IMR-90 (cell line): ENCODE measurements at regions of chr6 and their contacts with region 1.

Region 1: DNA sequence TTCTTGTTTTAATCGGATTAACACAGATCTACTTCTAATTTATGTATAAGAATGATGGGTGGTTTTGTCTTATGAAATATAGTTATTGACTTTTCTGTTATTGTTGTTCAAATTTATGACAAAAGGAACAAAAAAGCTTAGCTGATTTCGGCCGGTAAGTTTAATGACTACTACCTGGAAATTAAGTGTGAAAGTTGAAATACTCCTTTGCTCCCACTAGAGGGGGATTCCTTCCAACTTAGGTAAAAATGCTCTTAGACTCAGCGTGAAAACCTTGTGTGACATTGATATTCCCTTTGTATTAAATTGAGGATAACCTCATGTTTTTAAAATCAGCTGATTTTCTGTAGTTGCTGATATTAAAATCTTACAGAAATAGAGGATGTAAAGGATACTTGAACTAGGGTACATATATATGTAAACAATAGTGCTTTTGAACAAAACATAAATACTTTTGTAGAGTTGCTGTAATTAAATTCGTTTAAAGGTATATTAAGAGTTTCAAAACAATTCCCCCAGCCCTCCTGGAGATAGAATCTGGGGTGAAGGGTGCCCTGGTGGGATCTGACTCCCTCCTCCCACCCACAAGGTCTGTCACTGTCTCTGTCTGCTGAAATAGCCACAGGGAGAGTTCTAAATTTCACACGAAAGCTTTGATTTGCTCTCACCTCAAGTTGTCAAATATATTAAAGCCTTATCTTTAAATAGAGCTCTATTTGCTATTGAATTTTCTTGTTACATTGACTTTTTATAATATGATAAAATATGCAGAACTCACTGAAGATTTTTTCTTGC is 257.5 kb downstream of the ARID1B start:
- DNase-seq: peak; percentile 72
- ATAC-seq: peak; percentile 53
- H3K4me3 ChIP-seq: no peak overlapping the region
- H3K27ac ChIP-seq: no peak overlapping the region
- H3K4me1 ChIP-seq: peaks cover 6% of the 10 kb centered on the region
- H3K27me3 ChIP-seq: no peaks in the 10 kb centered on the region
- CTCF ChIP-seq: peak; percentile 75
- POLR2A ChIP-seq: no peak
- RAD21 ChIP-seq: peak; percentile 79

Region 2: GRCh38 chr6:156994215-156995076 is 40.2 kb before region 1 on chr6:
- CTCF ChIA-PET with region 1: no interaction called
- POLR2A ChIA-PET with region 1: no interaction called
- dilution Hi-C with region 1: no loop called
- in situ Hi-C with region 1: no loop called
- intact Hi-C with region 1: no loop called
- DNase-seq: no peak
- ATAC-seq: no peak
- H3K4me3 ChIP-seq: no peak overlapping the region
- H3K27ac ChIP-seq: no peak overlapping the region
- H3K4me1 ChIP-seq: peaks cover 10% of the 10 kb centered on the region
- H3K27me3 ChIP-seq: no peaks in the 10 kb centered on the region
- CTCF ChIP-seq: no peak
- POLR2A ChIP-seq: no peak
- RAD21 ChIP-seq: no peak

Region 3: GRCh38 chr6:157184202-157185020 is 149.8 kb after region 1 on chr6:
- CTCF ChIA-PET with region 1: interaction called, 8 read pairs
- POLR2A ChIA-PET with region 1: no interaction called
- dilution Hi-C with region 1: no loop called
- in situ Hi-C with region 1: loop called (anchors 5 kb)
- intact Hi-C with region 1: loop called (anchors 1 kb)
- DNase-seq: peak; percentile 56
- ATAC-seq: peak; percentile 91
- H3K4me3 ChIP-seq: no peak overlapping the region
- H3K27ac ChIP-seq: no peak overlapping the region
- H3K4me1 ChIP-seq: peaks cover 3% of the 10 kb centered on the region; the same call in 1 of the 2 replicates
- H3K27me3 ChIP-seq: no peaks in the 10 kb centered on the region
- CTCF ChIP-seq: peak; percentile 89
- POLR2A ChIP-seq: no peak
- RAD21 ChIP-seq: peak; percentile 96

Region 4: DNA sequence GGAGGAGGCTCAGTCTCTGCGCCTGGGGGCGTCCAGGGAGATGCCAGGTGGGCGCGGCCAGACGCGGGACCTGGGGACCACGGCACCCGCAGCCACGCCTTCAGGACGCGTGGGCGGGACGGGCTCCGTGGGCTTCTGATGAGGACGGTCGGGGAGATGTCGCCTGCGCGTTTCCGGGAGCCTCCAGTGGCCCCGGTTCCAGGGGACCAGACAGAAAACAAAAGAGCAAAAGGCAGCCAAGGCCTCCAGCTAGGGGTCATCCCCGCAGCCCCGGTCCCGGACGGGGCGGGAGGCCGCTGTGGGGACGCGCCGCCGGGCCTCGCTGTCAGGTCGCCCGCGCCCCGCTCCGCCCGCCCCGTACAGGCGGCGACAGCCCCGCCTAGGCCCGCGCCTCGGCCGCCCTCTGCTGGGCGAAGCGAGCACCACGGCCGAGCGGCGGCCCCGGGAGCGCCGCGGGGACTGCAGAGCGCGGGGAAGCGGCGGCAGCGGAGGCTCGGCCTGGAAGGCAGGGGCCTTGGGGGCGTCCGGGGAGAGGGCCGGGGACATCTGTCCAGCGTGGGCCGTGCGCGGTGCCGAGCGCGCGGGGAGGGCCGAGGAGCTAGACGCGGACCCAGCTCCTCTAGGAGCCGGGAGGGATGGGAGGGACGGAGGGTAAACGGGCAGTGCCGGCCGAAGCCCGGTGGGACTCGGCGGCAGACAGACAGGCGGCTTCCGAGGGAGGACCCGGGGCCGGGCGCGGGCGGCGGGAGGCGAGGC is 240.0 kb after region 1 on chr6:
- CTCF ChIA-PET with region 1: no interaction called
- POLR2A ChIA-PET with region 1: no interaction called
- dilution Hi-C with region 1: no loop called
- in situ Hi-C with region 1: no loop called
- intact Hi-C with region 1: loop called (anchors 1 kb)
- DNase-seq: peak; percentile 57
- ATAC-seq: peak; percentile 99
- H3K4me3 ChIP-seq: peak overlapping the region; percentile 90
- H3K27ac ChIP-seq: peak overlapping the region; percentile 79
- H3K4me1 ChIP-seq: peaks cover 3% of the 10 kb centered on the region
- H3K27me3 ChIP-seq: no peaks in the 10 kb centered on the region
- CTCF ChIP-seq: peak; percentile 85
- POLR2A ChIP-seq: peak; percentile 67
- RAD21 ChIP-seq: peak; percentile 78